ENCODE measurements at regions of chr10 and their contacts with region 1.

Region 1: DNA sequence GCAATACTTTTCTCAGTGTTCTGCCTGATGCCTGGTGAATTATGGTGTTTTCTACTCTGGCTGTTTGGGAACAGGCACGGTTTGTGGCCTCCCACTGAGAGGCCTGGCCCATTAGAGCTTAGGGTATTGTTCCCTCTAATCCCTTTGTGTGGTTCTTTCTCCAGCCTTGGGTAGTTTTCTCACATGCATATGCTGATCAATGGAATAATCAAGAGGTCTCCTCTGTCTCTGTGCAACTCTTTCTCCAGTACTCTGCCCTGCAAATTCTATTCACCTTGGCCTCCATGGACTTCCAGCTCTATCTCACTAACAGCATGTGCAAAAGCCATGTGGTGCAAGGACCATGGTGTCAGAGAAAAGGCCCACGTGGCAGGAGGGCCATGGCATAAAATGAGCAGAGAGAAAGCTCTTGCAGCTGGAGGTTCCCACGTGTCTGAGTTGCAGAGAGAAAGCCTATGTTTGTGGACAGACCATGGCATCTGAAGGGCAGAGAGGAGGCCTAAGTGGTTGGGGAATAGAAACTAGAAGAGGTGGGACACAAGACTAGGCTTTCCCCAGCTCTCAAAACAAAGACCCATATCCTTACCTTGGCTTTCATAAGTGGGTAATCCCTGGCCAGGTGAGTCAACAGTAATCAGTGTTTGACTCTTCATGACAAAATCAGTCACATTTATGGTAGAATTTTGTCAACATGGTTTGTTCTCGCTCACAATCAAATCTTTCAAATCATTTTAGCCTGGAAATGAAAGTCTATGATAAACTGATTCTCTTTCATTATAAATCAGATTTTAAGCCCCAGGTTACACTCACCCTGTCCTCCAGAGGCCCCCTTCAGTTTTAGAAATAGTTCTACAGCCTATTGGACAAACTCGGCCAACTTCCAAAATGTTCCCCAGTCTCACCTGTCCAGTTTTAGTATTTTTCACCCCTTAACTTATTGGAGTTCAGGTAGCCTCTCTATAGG is 17.3 kb downstream of the OPALIN start:
- DNase-seq: no peak
- H3K27ac ChIP-seq: no peak overlapping the region
- CTCF ChIP-seq: no peak

Region 2: DNA sequence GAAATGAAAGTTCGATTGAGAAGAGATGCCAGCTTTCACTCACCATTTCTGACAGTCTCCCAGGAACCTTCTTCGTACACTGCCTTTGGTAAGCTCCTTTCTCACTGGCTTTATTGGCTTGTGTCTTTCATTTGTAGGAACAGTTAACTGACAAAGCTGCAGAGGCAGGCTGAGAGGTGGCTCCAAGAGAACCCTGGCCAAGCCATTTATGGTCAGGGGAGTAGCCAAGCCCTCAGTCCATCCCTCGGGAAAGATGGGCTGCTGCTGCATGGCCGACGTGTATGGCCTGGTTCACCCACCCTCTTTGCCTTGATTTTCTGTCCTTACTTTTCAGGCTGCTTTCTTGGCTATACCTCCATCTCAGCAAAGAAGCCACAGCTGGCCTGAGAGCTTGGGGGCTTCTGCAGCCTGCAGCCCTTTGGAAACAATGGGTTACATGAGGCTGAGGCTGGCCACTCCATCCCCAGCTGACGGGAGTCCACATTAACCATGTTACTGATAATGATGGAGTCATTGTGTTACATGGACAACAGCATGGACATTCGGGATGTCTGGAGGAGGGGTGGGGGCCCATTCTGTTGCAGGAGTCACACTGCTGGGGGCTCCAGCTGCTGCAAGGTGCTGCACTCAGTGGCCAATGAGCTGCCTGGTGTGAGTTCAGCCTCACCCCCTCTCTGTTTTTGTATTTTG is 17.5 kb after region 1 on chr10 and contains the start of gene OPALIN:
- CTCF ChIA-PET with region 1: no interaction called
- POLR2A ChIA-PET with region 1: interaction called, 12 read pairs
- DNase-seq: no peak
- H3K27ac ChIP-seq: no peak within 1 kb of the TSS
- CTCF ChIP-seq: no peak

Measured in RWPE1 (cell line).